Mammary epithelial cell (primary cell): ENCODE measurements at regions of chr17 and their contacts with region 1.

Region 1: GRCh38 chr17:27609611-27610303 is 21.2 kb upstream of the LGALS9 start:
- DNase-seq: peak; percentile 42
- H3K4me3 ChIP-seq: no peak overlapping the region
- H3K27ac ChIP-seq: no peak overlapping the region
- H3K4me1 ChIP-seq: no peaks in the 10 kb centered on the region
- H3K27me3 ChIP-seq: no peaks in the 10 kb centered on the region
- CTCF ChIP-seq: peak; percentile 83 to 87

Region 2: GRCh38 chr17:27646232-27646631 is 36.5 kb after region 1 on chr17:
- CTCF ChIA-PET with region 1: interaction called, 3 read pairs
- dilution Hi-C with region 1: loop called (anchors 5 kb)
- in situ Hi-C with region 1: loop called (anchors 5 kb)
- intact Hi-C with region 1: loop called (anchors 1 kb)
- DNase-seq: no peak
- H3K4me3 ChIP-seq: no peak overlapping the region
- H3K27ac ChIP-seq: no peak overlapping the region
- H3K4me1 ChIP-seq: no peaks in the 10 kb centered on the region
- H3K27me3 ChIP-seq: peaks cover 1% of the 10 kb centered on the region
- CTCF ChIP-seq: no peak

Region 3: GRCh38 chr17:28008542-28008941 is 398.8 kb after region 1 on chr17:
- CTCF ChIA-PET with region 1: no interaction called
- dilution Hi-C with region 1: no loop called
- in situ Hi-C with region 1: no loop called
- intact Hi-C with region 1: no loop called
- DNase-seq: peak; percentile 60
- H3K4me3 ChIP-seq: no peak overlapping the region
- H3K27ac ChIP-seq: no peak overlapping the region
- H3K4me1 ChIP-seq: no peaks in the 10 kb centered on the region
- H3K27me3 ChIP-seq: peaks cover 1% of the 10 kb centered on the region
- CTCF ChIP-seq: no peak

Region 4: DNA sequence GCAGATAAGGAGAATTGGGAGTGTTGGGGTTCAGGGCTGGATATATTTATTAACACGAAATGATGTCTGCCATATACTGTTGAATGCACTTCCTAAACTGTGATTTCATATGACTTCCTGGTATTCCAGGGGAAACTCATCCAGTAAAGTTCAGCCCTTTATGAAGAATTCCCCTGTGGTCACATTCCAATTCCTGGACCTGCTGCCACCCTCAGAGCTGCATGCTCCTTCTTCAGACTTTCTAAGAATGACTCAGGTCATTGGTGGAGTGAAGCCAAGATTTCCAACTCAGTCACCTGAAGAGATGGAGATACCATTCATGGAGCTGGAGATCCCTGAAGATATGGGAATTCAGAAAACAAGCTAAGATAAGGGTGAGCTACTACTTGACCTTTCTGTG is 595.0 kb after region 1 on chr17:
- CTCF ChIA-PET with region 1: no interaction called
- dilution Hi-C with region 1: no loop called
- in situ Hi-C with region 1: no loop called
- intact Hi-C with region 1: no loop called
- DNase-seq: peak; percentile 61
- H3K4me3 ChIP-seq: no peak overlapping the region
- H3K27ac ChIP-seq: no peak overlapping the region
- H3K4me1 ChIP-seq: peaks cover 9% of the 10 kb centered on the region
- H3K27me3 ChIP-seq: no peaks in the 10 kb centered on the region
- CTCF ChIP-seq: no peak